ENCODE measurements at regions of chr17 and their contacts with region 1.

Region 1: GRCh38 chr17:39799395-39799794 is 61.7 kb downstream of the GRB7 start:
- DNase-seq: no peak
- H3K4me3 ChIP-seq: no peak overlapping the region
- H3K27ac ChIP-seq: no peak overlapping the region
- H3K4me1 ChIP-seq: no peaks in the 10 kb centered on the region
- H3K27me3 ChIP-seq: no peaks in the 10 kb centered on the region
- CTCF ChIP-seq: no peak
- POLR2A ChIP-seq: no peak

Region 2: GRCh38 chr17:39867880-39868553 is 68.6 kb after region 1 on chr17 and contains the start of gene ZPBP2:
- intact Hi-C with region 1: loop called (anchors 2 kb)
- DNase-seq: no peak
- H3K4me3 ChIP-seq: no peak within 1 kb of the TSS
- H3K27ac ChIP-seq: no peak within 1 kb of the TSS
- H3K4me1 ChIP-seq: peaks cover 8% of the 10 kb centered on the region
- H3K27me3 ChIP-seq: peaks cover 6% of the 10 kb centered on the region
- CTCF ChIP-seq: no peak
- POLR2A ChIP-seq: no peak
- total RNA-seq, gene ZPBP2: not detected

Measured in vagina (tissue), 2 donors.